ENCODE measurements at regions of chr14 and their contacts with region 1.

Region 1: GRCh38 chr14:55062517-55063351 is 11.3 kb downstream of the MAPK1IP1L start:
- DNase-seq: no peak
- ATAC-seq: peak in 1 of 4 experiments; percentile 21
- H3K4me3 ChIP-seq: no peak overlapping the region
- H3K4me3 Mint-ChIP-seq: no peak overlapping the region
- H3K27ac ChIP-seq: no peak overlapping the region
- H3K27ac Mint-ChIP-seq: peak overlapping the region in 1 of 2 donors; percentile 52
- H3K4me1 ChIP-seq: peaks cover 0 to 11% of the 10 kb centered on the region in 2 experiments
- H3K4me1 Mint-ChIP-seq: peaks cover 27 to 45% (median 42%) of the 10 kb centered on the region in 3 donors
- H3K27me3 ChIP-seq: no peaks in the 10 kb centered on the region
- H3K27me3 Mint-ChIP-seq: no peaks in the 10 kb centered on the region

Region 2: DNA sequence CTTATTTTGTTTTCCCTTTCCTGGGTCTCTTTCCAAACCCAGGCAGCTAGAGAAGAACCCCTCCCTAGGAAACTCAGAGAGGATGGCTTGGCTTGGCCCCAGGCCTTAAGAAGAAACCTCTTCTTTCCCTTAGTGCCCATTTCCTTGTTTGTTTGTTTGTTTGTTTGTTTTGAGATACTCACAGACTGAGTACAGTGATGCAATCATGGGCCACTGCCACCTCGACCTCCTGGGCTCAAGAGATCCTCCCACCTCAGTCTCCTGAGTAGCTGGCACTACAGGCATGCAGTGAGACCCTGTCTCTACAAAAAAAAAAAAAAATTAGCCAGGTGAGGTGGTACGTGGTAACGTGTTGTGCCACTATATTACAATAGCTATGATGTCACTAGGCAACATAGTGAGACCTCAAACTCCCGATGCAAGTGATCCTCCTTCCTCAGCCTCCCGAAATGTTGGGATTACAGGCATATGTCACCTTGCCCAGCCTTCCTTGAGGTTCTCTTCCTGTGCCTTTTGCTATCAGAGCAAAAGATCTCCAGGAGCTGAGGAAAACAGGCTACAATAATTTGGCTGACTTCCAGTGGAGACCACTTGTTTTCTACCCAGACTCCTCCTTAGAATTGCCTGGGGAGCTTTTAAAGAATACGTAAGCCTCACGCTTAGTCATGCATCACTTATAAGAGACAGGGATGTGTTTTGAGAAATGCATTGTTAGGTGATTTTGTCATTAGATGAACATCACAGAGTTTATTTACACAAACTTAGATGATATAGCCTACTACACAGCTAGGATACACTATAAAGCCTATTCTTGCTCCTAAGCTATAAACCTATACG is 31.8 kb after region 1 on chr14:
- CTCF ChIA-PET with region 1: interaction called in 1 of 2 experiments, 19 read pairs
- POLR2A ChIA-PET with region 1: no interaction called
- DNase-seq: no peak
- ATAC-seq: no peak
- H3K4me3 ChIP-seq: no peak overlapping the region
- H3K4me3 Mint-ChIP-seq: no peak overlapping the region
- H3K27ac ChIP-seq: no peak overlapping the region
- H3K27ac Mint-ChIP-seq: no peak overlapping the region
- H3K4me1 ChIP-seq: peaks cover 0 to 17% of the 10 kb centered on the region in 2 experiments
- H3K4me1 Mint-ChIP-seq: peaks cover 9 to 20% (median 20%) of the 10 kb centered on the region in 3 donors
- H3K27me3 ChIP-seq: no peaks in the 10 kb centered on the region
- H3K27me3 Mint-ChIP-seq: no peaks in the 10 kb centered on the region

Region 3: DNA sequence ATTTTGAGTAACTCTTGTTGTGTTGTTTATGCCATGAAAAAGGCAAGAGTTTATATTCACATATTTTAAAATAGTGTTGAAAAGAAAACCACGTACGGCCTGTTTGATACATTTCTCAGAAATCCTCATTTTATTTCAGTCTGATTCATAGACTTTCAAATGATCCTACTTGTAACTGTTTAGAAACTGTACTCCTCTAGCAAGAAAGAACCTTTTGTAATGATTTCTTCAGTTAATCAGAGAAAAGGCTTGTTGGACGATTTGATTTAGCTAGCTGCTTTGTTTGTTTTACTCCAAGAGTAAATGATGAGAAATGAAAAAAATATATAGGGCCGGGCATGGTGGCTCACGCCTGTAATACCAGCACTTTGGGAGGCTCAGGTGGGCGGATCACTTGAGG is 225.7 kb after region 1 on chr14:
- CTCF ChIA-PET with region 1: no interaction called
- POLR2A ChIA-PET with region 1: no interaction called
- DNase-seq: no peak
- ATAC-seq: no peak
- H3K4me3 ChIP-seq: no peak overlapping the region
- H3K4me3 Mint-ChIP-seq: no peak overlapping the region
- H3K27ac ChIP-seq: no peak overlapping the region
- H3K27ac Mint-ChIP-seq: no peak overlapping the region
- H3K4me1 ChIP-seq: peaks cover 0 to 8% of the 10 kb centered on the region in 2 experiments
- H3K4me1 Mint-ChIP-seq: peaks cover 17 to 60% (median 57%) of the 10 kb centered on the region in 3 donors
- H3K27me3 ChIP-seq: no peaks in the 10 kb centered on the region
- H3K27me3 Mint-ChIP-seq: no peaks in the 10 kb centered on the region

Region 4: DNA sequence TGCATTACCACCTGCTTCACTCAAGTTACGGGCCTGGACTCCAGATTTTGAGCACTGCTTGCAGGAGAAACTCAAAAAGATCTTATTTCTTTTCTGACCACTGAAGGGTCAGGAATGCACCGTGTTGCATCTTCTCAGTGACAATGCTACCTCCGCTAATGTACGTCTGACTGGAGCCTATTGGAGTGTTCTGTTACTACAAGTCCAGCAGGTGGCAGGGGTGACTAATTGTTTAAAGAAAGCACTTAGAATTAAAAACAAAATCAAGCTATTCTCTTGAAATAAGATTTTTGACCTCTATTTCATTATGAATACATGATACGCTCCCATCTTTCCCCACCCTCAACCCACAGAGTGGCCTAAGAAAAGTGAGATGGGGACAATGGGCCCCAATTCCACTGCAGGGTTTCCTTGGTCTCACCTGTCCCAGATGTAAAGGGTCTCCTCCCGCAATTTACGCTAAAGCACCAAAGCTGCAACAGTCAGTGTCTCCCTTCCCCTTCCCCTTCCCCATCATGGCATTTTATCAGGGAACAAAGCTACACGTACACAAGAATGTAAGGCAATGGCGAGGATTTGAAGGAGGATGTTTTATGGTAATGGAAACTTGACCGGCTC is 375.4 kb after region 1 on chr14:
- CTCF ChIA-PET with region 1: no interaction called
- POLR2A ChIA-PET with region 1: interaction called in 1 of 2 experiments, 13 read pairs
- DNase-seq: peak in 2 of 35 experiments; percentile 16 to 34
- ATAC-seq: no peak
- H3K4me3 ChIP-seq: no peak overlapping the region
- H3K4me3 Mint-ChIP-seq: no peak overlapping the region
- H3K27ac ChIP-seq: no peak overlapping the region
- H3K27ac Mint-ChIP-seq: no peak overlapping the region
- H3K4me1 ChIP-seq: peaks cover 16 to 18% of the 10 kb centered on the region in 2 experiments
- H3K4me1 Mint-ChIP-seq: peaks cover 19 to 21% (median 20%) of the 10 kb centered on the region in 3 donors
- H3K27me3 ChIP-seq: peaks cover 0 to 11% of the 10 kb centered on the region in 2 experiments
- H3K27me3 Mint-ChIP-seq: peaks cover 0 to 2% of the 10 kb centered on the region in 2 donors